ENCODE measurements at regions of chr2 and their contacts with region 1.

Region 1: GRCh38 chr2:46062637-46063412 is 234.4 kb upstream of the EPAS1 start:
- DNase-seq: peak; percentile 77
- H3K4me3 Mint-ChIP-seq: no peak overlapping the region
- H3K27ac Mint-ChIP-seq: no peak overlapping the region
- H3K4me1 Mint-ChIP-seq: peaks cover 16% of the 10 kb centered on the region
- H3K27me3 Mint-ChIP-seq: no peaks in the 10 kb centered on the region
- CTCF ChIP-seq: peak; percentile 70

Region 2: GRCh38 chr2:45729753-45730512 is 332.9 kb before region 1 on chr2:
- CTCF ChIA-PET with region 1: no interaction called
- intact Hi-C with region 1: no loop called
- DNase-seq: peak; percentile 14
- H3K4me3 Mint-ChIP-seq: no peak overlapping the region
- H3K27ac Mint-ChIP-seq: no peak overlapping the region
- H3K4me1 Mint-ChIP-seq: no peaks in the 10 kb centered on the region
- H3K27me3 Mint-ChIP-seq: no peaks in the 10 kb centered on the region
- CTCF ChIP-seq: peak; percentile 48

Region 3: DNA sequence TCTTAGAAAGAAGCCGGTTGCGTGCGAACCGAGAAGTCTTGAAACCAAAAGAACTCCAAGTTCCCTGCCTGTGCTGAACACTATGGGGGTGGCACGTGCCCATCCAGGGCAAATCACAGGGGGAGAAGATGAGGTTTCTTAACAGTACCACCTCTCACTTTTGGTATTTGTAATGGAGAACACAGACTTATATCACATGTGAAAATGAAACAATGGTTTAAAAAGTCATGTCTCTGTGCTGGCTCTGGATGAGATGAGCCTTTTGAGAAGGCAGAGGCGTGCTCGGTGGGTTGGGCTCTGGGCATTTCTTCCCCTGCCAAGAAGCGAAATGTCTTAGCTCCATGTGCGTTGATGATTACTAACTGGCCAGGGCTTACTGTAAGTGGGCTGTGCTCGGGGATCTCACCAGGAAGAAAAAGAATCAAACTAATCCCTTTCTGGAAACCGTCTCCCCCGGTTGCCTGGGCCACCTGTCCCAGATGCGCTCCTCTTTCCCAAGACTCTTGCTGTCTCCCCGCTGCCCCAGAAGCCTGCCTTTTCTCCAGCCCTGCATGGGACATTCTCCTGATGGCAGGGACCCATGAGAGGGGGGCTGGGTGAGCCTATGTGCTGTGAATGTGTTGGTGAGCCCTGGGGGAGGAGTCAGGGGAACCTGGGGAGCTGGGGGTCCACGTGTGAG is 158.4 kb before region 1 on chr2:
- CTCF ChIA-PET with region 1: no interaction called
- intact Hi-C with region 1: no loop called
- DNase-seq: no peak
- H3K4me3 Mint-ChIP-seq: no peak overlapping the region
- H3K27ac Mint-ChIP-seq: no peak overlapping the region
- H3K4me1 Mint-ChIP-seq: peaks cover 5% of the 10 kb centered on the region
- H3K27me3 Mint-ChIP-seq: no peaks in the 10 kb centered on the region
- CTCF ChIP-seq: no peak

Region 4: DNA sequence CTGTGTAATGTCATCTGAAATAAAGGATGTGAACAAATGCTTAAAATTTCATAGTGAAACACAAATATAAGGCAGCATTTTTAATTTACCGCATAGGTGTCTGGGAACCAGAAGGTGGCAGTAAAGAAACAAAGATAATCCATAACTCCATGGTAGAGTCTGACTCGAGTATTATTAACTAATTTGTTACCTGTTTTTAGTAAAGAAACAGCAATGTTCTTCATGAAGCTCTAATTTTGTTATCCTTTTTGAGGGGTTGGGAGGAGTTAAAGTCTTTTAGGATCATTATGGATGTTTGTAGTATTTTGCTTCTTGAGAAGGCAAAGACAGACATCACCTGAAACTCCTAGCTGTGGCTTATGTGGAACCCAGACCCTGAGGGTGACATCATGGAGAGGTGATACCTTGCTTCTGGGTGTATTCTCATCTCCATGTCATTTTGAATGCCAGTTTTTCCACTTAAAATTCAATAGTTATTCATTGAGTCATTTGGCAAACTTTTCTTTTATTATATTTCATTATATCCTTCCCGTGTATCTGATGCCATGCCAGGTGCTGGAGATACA is 51.8 kb before region 1 on chr2:
- CTCF ChIA-PET with region 1: interaction called, 13 read pairs
- intact Hi-C with region 1: no loop called
- DNase-seq: no peak
- H3K4me3 Mint-ChIP-seq: no peak overlapping the region
- H3K27ac Mint-ChIP-seq: no peak overlapping the region
- H3K4me1 Mint-ChIP-seq: no peaks in the 10 kb centered on the region
- H3K27me3 Mint-ChIP-seq: no peaks in the 10 kb centered on the region
- CTCF ChIP-seq: no peak

Region 5: GRCh38 chr2:46164581-46165301 is 101.9 kb after region 1 on chr2:
- CTCF ChIA-PET with region 1: interaction called, 3 read pairs
- intact Hi-C with region 1: loop called (anchors 10 kb)
- DNase-seq: peak; percentile 26
- H3K4me3 Mint-ChIP-seq: peak overlapping the region; percentile 3
- H3K27ac Mint-ChIP-seq: peak overlapping the region; percentile 44
- H3K4me1 Mint-ChIP-seq: peaks cover 34% of the 10 kb centered on the region
- H3K27me3 Mint-ChIP-seq: no peaks in the 10 kb centered on the region
- CTCF ChIP-seq: no peak

Region 6: GRCh38 chr2:46230115-46230571 is 167.3 kb after region 1 on chr2:
- CTCF ChIA-PET with region 1: interaction called, 14 read pairs
- intact Hi-C with region 1: no loop called
- DNase-seq: peak; percentile 72
- H3K4me3 Mint-ChIP-seq: peak overlapping the region; percentile 14
- H3K27ac Mint-ChIP-seq: peak overlapping the region; percentile 90
- H3K4me1 Mint-ChIP-seq: peaks cover 54% of the 10 kb centered on the region
- H3K27me3 Mint-ChIP-seq: no peaks in the 10 kb centered on the region
- CTCF ChIP-seq: no peak

Region 7: GRCh38 chr2:46296840-46297545 is 234.2 kb after region 1 on chr2 and contains the start of gene EPAS1:
- CTCF ChIA-PET with region 1: interaction called, 11 read pairs
- intact Hi-C with region 1: loop called (anchors 5 kb)
- DNase-seq: peak; percentile 80
- H3K4me3 Mint-ChIP-seq: peak within 1 kb of the TSS; percentile 95
- H3K27ac Mint-ChIP-seq: peak within 1 kb of the TSS; percentile 11
- H3K4me1 Mint-ChIP-seq: peaks cover 15% of the 10 kb centered on the region
- H3K27me3 Mint-ChIP-seq: no peaks in the 10 kb centered on the region
- CTCF ChIP-seq: no peak
- total RNA-seq, gene EPAS1: 18.5 and 28.1 TPM in 2 replicates